ENCODE measurements at regions of chr2 and their contacts with region 1.

Region 1: DNA sequence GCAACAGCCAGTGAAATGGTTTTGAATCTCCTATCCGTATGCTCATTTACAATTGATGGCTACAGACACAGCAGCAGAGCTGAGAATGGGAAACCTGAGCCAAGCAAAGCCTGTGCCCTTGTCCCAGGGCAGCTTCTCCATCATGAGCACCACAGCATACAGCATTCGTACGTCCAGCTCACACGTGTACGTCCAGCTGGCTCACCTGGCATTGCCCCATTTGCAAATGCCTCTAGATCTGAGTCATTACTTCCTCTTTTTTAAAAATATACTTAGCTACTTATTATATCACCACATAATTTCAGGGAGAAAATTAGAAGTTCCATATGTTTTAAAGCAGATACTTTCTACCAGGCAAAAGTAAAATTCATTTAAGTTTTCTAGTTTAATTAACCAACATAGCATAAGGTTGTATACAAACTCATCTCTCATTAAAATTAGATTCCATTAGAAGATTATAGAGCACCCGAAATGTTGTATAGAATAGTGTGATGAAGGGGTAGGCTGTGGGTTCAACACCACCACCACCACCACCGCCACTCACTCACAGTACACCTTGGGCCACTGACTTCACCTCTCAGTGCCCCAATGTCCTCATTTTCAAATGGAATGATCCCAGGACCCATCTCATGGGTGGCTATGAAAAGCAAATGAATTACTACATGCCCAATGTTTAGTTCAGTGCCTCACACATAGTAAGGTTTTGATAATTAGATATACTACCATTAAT is 31.4 kb upstream of the TMEM177 start:
- DNase-seq: peak; percentile 86
- H3K4me3 ChIP-seq: no peak overlapping the region
- H3K27ac ChIP-seq: peak overlapping the region; percentile 85
- H3K4me1 ChIP-seq: peaks cover 71% of the 10 kb centered on the region
- H3K27me3 ChIP-seq: no peaks in the 10 kb centered on the region
- CTCF ChIP-seq: no peak
- POLR2A ChIP-seq: no peak

Region 2: GRCh38 chr2:119659601-119660342 is 12.2 kb after region 1 on chr2:
- CTCF ChIA-PET with region 1: interaction called, 257 read pairs
- POLR2A ChIA-PET with region 1: interaction called, 5 read pairs
- dilution Hi-C with region 1: no loop called
- intact Hi-C with region 1: loop called (anchors 1 kb)
- DNase-seq: peak; percentile 52
- H3K4me3 ChIP-seq: no peak overlapping the region
- H3K27ac ChIP-seq: no peak overlapping the region
- H3K4me1 ChIP-seq: peaks cover 15% of the 10 kb centered on the region
- H3K27me3 ChIP-seq: peaks cover 4% of the 10 kb centered on the region in 2 experiments
- CTCF ChIP-seq: peak; percentile 83 to 87
- POLR2A ChIP-seq: no peak

Region 3: GRCh38 chr2:119753041-119753929 is 105.7 kb after region 1 on chr2:
- CTCF ChIA-PET with region 1: interaction called, 3 read pairs
- POLR2A ChIA-PET with region 1: no interaction called
- dilution Hi-C with region 1: no loop called
- intact Hi-C with region 1: loop called (anchors 2 kb)
- DNase-seq: peak; percentile 65
- H3K4me3 ChIP-seq: no peak overlapping the region
- H3K27ac ChIP-seq: no peak overlapping the region
- H3K4me1 ChIP-seq: peaks cover 14% of the 10 kb centered on the region
- H3K27me3 ChIP-seq: no peaks in the 10 kb centered on the region
- CTCF ChIP-seq: peak; percentile 67 to 68
- POLR2A ChIP-seq: no peak

Region 4: DNA sequence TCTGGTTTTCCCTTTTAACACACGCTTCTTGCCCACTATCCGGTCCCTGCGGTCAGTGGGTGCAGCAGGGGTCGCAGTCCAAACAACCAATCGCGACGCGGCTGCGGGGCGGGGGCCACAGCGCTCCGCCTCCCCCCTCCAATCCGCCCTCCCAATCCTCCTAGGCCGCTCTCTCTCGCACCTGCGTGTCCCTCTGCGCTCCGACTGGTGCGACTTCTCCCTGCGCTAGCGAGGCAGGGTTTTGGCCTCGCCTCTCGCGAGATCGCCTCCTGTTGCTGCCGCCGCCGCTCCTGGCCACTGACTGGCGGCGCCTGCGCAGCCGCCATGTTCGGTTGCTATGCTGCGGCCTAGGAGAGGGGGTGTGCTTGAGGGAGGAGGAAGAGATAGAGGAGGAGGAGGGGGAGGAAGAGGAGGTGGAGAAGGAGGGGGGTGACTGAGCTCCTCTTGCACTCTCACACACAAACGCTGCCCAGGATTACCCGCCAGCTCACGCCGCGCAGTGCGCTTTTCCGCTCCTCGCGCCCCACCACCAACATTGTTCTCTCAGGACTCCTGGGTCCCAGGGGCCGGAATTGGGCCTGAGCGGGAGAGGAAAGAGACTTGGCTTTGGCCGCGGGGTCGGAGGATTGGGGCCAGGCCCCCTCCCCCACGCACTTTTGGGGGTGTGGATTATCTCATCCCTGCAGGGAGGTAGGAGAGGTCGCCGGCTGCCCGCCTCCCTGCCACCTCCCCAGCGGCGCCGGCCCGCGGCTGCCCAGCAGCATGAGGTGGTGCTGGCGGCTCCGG is 112.0 kb after region 1 on chr2 and contains the start of gene PTPN4:
- CTCF ChIA-PET with region 1: no interaction called
- POLR2A ChIA-PET with region 1: no interaction called
- dilution Hi-C with region 1: no loop called
- intact Hi-C with region 1: loop called (anchors 1 kb)
- DNase-seq: peak; percentile 99
- H3K4me3 ChIP-seq: peak within 1 kb of the TSS; percentile 55 to 98 (median 97)
- H3K27ac ChIP-seq: peak within 1 kb of the TSS; percentile 52
- H3K4me1 ChIP-seq: peaks cover 19% of the 10 kb centered on the region
- H3K27me3 ChIP-seq: no peaks in the 10 kb centered on the region
- CTCF ChIP-seq: no peak
- POLR2A ChIP-seq: peak; percentile 64
- total RNA-seq, gene PTPN4: 26.1 and 29.6 TPM in 2 replicates

Region 5: DNA sequence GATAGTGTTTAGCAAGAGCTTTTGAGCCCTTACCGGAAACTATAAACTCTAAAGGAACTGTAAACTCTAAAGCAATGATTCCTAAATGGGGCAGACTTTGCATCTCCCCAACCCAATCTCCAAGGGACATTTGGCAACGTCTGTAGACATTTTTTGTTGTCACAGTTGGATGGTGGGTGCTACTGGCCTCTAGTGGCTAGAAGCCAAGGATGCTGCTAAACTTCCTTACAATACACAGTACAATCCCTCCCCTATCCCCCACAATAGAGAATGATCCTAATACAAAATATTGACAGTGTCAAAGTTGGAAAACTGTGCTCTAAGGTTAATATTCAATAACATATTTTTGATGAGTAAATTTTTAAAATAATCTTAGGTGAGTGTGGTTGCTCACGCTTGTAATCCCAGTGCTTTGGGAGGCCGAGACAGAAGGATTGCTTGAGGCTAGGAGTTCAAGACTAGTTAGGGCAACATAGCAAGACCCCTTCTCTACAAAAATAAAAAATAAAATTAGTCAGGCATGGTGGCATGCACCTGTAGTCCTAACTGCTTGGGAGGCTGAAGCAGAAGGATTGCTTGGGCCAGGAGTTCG is 178.9 kb after region 1 on chr2:
- CTCF ChIA-PET with region 1: interaction called, 3 read pairs
- POLR2A ChIA-PET with region 1: no interaction called
- dilution Hi-C with region 1: no loop called
- intact Hi-C with region 1: loop called (anchors 2 kb)
- DNase-seq: peak; percentile 49
- H3K4me3 ChIP-seq: no peak overlapping the region
- H3K27ac ChIP-seq: no peak overlapping the region
- H3K4me1 ChIP-seq: peaks cover 9% of the 10 kb centered on the region
- H3K27me3 ChIP-seq: no peaks in the 10 kb centered on the region
- CTCF ChIP-seq: peak; percentile 68 to 71
- POLR2A ChIP-seq: no peak

Region 6: GRCh38 chr2:120134263-120134662 is 486.7 kb after region 1 on chr2:
- CTCF ChIA-PET with region 1: no interaction called
- POLR2A ChIA-PET with region 1: no interaction called
- dilution Hi-C with region 1: no loop called
- intact Hi-C with region 1: loop called (anchors 2 kb)
- DNase-seq: peak; percentile 89
- H3K4me3 ChIP-seq: no peak overlapping the region
- H3K27ac ChIP-seq: peak overlapping the region; percentile 82
- H3K4me1 ChIP-seq: peaks cover 37% of the 10 kb centered on the region
- H3K27me3 ChIP-seq: no peaks in the 10 kb centered on the region
- CTCF ChIP-seq: no peak
- POLR2A ChIP-seq: peak; percentile 61

Region 7: DNA sequence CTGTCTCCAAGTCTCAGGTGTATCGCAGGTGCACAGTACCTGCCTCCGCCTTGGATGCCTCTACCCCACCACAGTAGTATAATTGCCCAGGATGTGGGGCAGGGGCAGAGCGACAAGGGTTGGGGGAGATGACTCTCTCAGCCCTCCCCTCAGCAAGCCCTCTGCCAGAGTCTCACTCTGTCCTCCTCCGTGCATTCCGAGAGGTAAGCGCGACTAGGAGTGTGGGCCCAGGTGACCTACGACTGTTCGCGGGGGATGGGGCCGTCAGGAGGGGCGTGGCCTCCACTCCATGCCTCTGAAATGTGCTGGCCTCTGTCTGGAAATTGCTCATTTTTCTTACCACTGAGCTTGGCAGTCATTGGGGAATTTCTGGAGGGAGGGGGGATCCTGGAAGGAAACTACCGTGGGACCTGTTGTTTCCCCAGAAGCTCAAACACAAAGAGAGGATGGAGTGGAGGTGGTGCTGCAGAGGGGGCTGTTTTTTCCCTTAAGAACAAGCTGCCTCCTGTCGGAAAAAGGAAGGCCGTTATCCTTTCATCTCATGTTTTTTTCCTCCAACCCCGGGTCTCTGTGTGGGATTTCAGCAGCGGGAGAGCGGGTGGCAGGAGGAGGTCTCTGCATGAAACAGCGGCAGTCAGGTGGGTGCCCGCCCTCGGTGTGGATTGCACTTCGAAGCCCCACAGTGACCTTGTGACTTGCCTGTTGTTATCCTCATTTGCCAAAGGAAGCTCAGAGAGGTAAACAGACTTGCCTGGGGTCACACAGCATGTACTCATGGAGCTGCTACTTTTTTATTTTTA is 592.1 kb after region 1 on chr2:
- CTCF ChIA-PET with region 1: no interaction called
- POLR2A ChIA-PET with region 1: no interaction called
- dilution Hi-C with region 1: no loop called
- intact Hi-C with region 1: loop called (anchors 1 kb)
- DNase-seq: peak; percentile 99
- H3K4me3 ChIP-seq: no peak overlapping the region
- H3K27ac ChIP-seq: peak overlapping the region; percentile 37
- H3K4me1 ChIP-seq: peaks cover 34% of the 10 kb centered on the region
- H3K27me3 ChIP-seq: no peaks in the 10 kb centered on the region
- CTCF ChIP-seq: peak in 1 of 2 donors; percentile 4
- POLR2A ChIP-seq: peak; percentile 57

Measured in endothelial cell of umbilical vein (primary cell).